ENCODE measurements at regions of chr3 and their contacts with region 1.

Region 1: DNA sequence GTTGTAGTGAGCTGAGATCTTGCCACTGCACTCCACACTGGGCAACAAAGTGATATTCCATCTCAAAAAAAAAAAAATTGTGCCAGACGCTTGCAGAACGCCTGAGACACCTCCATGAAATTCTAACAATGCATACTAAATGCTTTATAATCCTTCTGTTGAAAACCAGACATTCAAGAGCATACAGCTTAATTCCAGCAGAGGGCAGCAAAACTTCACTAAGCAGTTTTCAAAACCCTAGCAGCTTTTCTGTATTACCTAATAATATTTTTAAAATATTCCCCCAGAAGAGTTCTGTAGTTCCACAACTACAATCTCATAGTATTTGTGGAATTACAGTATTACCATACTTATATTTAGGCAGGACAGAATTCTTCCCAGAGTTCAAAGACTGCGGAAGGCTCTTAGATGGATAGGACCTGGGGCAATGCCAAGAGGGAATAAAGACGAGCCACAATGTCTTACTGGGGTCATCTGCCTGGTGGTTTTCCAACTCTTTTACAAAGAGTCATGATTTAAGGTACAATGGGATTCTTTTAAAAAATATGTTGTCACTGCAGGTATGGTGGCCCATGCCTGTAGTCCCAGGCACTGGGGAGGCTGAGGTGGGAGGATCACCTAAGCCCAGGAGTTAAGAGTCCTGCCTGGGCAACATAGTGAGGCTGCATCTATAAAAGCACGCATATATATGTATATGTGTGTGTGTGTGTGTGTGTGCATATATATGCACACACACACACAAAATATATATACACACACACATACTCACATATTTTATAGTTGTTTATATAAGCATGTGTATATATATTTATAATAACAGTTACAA is 19.6 kb upstream of the TASOR start:
- DNase-seq: peak in 1 of 3 donors; percentile 53
- ATAC-seq: peak; percentile 79 to 93 (median 86)
- H3K4me3 ChIP-seq: no peak overlapping the region
- H3K27ac ChIP-seq: no peak overlapping the region
- H3K4me1 ChIP-seq: no peaks in the 10 kb centered on the region
- H3K27me3 ChIP-seq: no peaks in the 10 kb centered on the region
- CTCF ChIP-seq: peak; percentile 83 to 90 (median 84)
- POLR2A ChIP-seq: no peak

Region 2: GRCh38 chr3:56801662-56802377 is 99.1 kb after region 1 on chr3 and contains the start of gene ARHGEF3:
- intact Hi-C with region 1: loop called in 1 of 2 experiments (anchors 5 kb)
- DNase-seq: peak; percentile 89 to 92 (median 92)
- ATAC-seq: peak; percentile 94 to 98 (median 96)
- H3K4me3 ChIP-seq: peak within 1 kb of the TSS; percentile 54 to 67 (median 62)
- H3K27ac ChIP-seq: peak within 1 kb of the TSS in 2 of 3 donors; percentile 11 to 30
- H3K4me1 ChIP-seq: peaks cover 0 to 10% (median 1%) of the 10 kb centered on the region in 4 donors
- H3K27me3 ChIP-seq: no peaks in the 10 kb centered on the region
- CTCF ChIP-seq: peak; percentile 54 to 61 (median 58)
- POLR2A ChIP-seq: peak; percentile 74
- total RNA-seq, gene ARHGEF3: 1.0 to 2.9 (median 1.6) TPM

Region 3: DNA sequence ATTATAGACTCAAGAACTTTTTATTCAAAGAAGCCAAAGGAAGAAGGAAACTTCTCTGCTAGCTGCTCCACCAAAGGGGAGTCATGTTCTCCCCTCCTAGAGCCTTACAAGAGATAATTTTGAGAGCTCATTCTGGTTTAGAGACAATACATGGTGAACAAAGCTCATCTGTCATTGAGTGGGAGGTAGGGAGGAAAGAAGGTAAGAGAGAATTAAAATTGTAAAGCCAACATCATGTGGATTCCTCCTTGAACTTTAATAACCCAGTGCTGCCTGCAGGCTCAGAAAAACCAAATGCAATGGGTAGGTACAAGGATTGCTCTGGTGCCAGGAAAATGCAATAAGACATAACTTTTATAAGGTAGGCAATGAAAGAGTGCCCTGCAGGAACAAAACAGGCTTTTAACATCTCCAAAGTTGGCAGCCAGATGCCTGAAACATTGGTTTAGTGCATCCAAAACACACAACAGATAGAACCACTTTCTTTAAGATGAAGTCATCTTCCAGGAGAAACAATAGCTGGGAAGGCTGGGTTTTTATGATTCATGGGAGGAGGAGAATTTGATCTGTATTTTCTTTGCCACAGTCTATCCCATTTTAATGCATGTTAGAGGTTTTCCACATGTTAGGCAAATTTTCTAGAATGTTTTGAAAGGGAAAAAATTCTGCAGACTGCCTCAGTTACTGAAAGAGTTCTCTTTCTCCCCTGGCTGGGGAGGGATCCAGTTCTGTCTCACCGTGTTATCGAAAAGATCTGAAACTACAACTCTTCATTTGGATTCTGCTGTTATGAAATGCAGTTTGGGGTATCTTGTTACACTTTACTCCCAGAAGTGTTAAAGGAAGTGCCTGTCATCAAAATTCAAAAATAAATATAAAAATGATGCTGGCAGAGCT is 110.3 kb after region 1 on chr3:
- intact Hi-C with region 1: no loop called
- DNase-seq: no peak
- ATAC-seq: no peak
- H3K4me3 ChIP-seq: no peak overlapping the region
- H3K27ac ChIP-seq: no peak overlapping the region
- H3K4me1 ChIP-seq: no peaks in the 10 kb centered on the region
- H3K27me3 ChIP-seq: peaks cover 0 to 3% of the 10 kb centered on the region in 2 donors
- CTCF ChIP-seq: no peak
- POLR2A ChIP-seq: no peak

Region 4: GRCh38 chr3:56988458-56989168 is 285.9 kb after region 1 on chr3:
- intact Hi-C with region 1: loop called (anchors 5 kb)
- DNase-seq: peak; percentile 67 to 76 (median 67)
- ATAC-seq: peak; percentile 87 to 94 (median 91)
- H3K4me3 ChIP-seq: no peak overlapping the region
- H3K27ac ChIP-seq: no peak overlapping the region
- H3K4me1 ChIP-seq: no peaks in the 10 kb centered on the region
- H3K27me3 ChIP-seq: no peaks in the 10 kb centered on the region
- CTCF ChIP-seq: peak; percentile 77 to 83 (median 80)
- POLR2A ChIP-seq: no peak

Measured in right lobe of liver (tissue), 6 donors.